Spleen (tissue), 13 donors: ENCODE measurements at regions of chr13 and their contacts with region 1.

Region 1: DNA sequence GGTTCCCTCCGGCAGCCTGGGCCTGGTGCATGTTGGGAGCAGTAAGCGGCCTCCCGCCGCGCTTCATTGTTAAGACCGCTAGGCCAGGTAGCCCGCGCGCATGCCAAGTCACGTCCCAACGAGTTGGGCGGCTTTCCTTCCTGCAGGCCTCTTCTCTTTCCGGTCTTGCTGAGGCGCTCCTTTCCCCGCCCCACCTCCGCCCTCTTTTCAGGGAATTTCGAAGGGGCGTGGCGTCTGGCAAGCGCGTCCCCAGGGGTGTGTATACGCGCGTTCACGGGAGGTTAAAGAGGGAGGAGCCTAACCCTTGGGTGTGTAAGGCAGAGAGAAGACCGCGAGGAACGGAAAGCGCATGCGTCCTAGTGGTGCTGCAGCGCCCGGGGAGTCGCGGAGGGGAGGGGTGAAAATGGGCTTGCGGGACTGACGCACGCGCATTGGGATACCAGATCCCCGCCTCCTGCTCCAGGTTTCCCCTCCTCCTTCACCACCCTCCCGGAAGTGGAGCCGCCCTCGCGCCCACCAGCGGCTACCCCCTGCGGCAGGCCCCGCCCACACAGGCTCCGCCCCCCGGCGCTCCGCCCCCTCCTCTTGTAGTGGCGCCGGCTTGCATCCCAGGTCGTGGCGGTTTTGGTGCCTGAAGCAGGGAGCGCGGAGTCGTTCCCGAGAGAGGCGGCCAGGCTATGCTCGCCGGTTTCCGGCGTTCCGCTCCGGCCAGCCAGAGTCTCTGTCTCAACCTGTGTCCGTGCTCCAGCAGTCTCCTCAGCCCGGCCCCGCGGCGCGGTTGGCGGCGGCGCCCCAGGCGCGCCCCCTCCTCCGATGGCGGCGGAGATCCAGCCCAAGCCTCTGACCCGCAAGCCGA is at the start of gene WDFY2:
- DNase-seq: peak; percentile 100
- H3K4me3 ChIP-seq: peak within 1 kb of the TSS; percentile 80 to 99 (median 92)
- H3K27ac ChIP-seq: peak within 1 kb of the TSS; percentile 69 to 96 (median 94)
- H3K4me1 ChIP-seq: peaks cover 6 to 51% (median 36%) of the 10 kb centered on the region in 6 donors
- H3K27me3 ChIP-seq: no peaks in the 10 kb centered on the region
- CTCF ChIP-seq: peak in 6 of 11 experiments; percentile 5 to 52 (median 40)
- POLR2A ChIP-seq: peak in 1 of 3 donors; percentile 83
- total RNA-seq, gene WDFY2: 18.5 to 32.2 (median 25.5) TPM

Region 2: GRCh38 chr13:51452361-51453206 is 131.5 kb before region 1 on chr13 and contains the start of gene INTS6:
- intact Hi-C with region 1: loop called (anchors 5 kb)
- DNase-seq: peak; percentile 100
- H3K4me3 ChIP-seq: peak within 1 kb of the TSS; percentile 64 to 96 (median 80)
- H3K27ac ChIP-seq: peak within 1 kb of the TSS; percentile 97 to 100 (median 99)
- H3K4me1 ChIP-seq: peaks cover 28 to 77% (median 47%) of the 10 kb centered on the region in 6 donors
- H3K27me3 ChIP-seq: no peaks in the 10 kb centered on the region
- CTCF ChIP-seq: no peak
- POLR2A ChIP-seq: peak; percentile 99 to 100 (median 99)
- total RNA-seq, gene INTS6: 40.8 to 61.8 (median 51.0) TPM

Region 3: GRCh38 chr13:51803422-51804294 is 219.6 kb after region 1 on chr13 and contains the start of gene DHRS12:
- intact Hi-C with region 1: loop called (anchors 5 kb)
- DNase-seq: peak; percentile 98
- H3K4me3 ChIP-seq: peak within 1 kb of the TSS; percentile 45 to 82 (median 64)
- H3K27ac ChIP-seq: peak within 1 kb of the TSS; percentile 97 to 100 (median 100)
- H3K4me1 ChIP-seq: peaks cover 13 to 54% (median 39%) of the 10 kb centered on the region in 6 donors
- H3K27me3 ChIP-seq: no peaks in the 10 kb centered on the region
- CTCF ChIP-seq: peak in 5 of 11 experiments; percentile 18 to 54 (median 44)
- POLR2A ChIP-seq: peak; percentile 11 to 39 (median 29)
- total RNA-seq, gene DHRS12: 11.3 to 22.8 (median 17.8) TPM